PC-9 (cell line): ENCODE measurements at regions of chr9 and their contacts with region 1.

Region 1: GRCh38 chr9:36008774-36009300 is 27.9 kb upstream of the RECK start:
- DNase-seq: peak in 1 of 2 experiments; percentile 15
- H3K4me3 ChIP-seq: no peak overlapping the region
- H3K27ac ChIP-seq: no peak overlapping the region
- H3K4me1 ChIP-seq: no peaks in the 10 kb centered on the region
- H3K27me3 ChIP-seq: peaks cover 8% of the 10 kb centered on the region
- CTCF ChIP-seq: peak; percentile 80

Region 2: DNA sequence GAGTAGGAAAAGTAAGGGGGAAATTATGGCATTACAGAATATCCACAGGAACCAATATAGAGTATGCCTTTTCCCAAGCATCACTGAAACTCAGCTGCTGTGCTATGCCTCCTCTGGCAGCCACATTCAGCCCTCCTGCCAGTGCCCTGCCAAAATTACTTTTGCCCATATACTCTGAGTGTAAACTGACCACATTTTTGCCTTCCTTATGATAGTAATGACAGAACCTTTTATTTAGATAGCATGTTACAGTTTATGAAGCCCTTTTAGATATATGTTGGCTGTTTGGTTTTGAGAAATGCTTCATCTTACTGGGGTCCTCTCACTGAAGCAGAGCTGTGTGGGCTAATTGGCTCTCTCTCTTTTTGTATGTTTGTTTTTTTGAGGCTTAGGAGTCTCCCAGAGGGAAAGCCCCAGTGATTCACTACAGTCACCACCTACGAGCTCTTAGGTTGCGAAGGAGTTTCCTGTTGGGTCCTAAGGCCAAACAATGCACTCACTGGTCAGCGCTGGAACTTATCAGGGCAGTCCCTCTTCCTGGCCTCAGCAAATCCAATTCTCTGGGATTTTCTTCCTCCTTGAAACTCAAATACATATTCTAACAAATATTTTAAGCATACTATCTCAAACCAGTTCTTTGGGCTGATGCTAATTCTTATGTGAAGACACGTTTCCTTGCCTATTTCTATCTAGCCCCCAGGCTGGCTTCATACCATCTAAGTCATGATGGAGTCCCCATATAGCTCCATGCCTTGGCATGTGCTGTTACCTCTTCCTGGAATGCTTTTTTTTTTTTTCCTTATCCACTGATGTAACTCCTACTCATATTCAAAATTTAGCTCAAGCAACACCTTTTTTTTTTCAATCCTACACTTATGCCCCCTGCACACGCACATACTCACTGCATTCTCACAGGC is 1047.0 kb before region 1 on chr9:
- CTCF ChIA-PET with region 1: no interaction called
- POLR2A ChIA-PET with region 1: no interaction called
- intact Hi-C with region 1: no loop called
- DNase-seq: no peak
- H3K4me3 ChIP-seq: no peak overlapping the region
- H3K27ac ChIP-seq: no peak overlapping the region
- H3K4me1 ChIP-seq: no peaks in the 10 kb centered on the region
- H3K27me3 ChIP-seq: 0 out of 2 replicates have a peak, but pooled peaks cover 4% of the 10 kb centered on the region
- CTCF ChIP-seq: no peak

Region 3: DNA sequence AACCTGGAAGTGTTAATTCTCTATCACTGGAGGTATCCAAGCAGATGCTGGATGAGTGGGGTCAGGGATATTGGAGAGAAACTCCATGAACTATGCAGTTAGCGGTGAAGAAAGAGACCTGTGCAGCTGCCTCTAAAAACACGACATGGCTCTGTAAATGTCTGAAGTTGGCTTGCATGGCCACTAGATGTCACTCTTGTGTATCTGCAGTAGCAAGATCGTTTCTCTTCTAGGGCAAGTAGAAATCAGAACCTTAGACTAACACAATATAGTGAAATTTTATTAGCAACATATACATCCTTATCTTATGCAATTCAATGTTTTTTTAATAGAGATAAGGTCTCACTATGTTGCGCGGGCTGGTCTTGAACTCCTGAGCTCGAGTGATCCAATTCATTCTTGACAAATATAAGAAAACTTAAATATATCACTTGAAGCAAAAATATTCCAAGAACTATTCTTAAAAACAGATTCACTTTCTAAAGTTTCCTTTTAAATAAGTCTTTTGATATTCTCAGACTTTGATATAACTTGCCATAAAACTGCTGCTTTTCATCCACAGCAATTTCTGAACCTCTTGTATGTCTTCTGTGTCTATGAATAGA is 53.8 kb before region 1 on chr9:
- CTCF ChIA-PET with region 1: interaction called, 11 read pairs
- POLR2A ChIA-PET with region 1: no interaction called
- intact Hi-C with region 1: no loop called
- DNase-seq: peak; percentile 30 to 56
- H3K4me3 ChIP-seq: no peak overlapping the region
- H3K27ac ChIP-seq: no peak overlapping the region
- H3K4me1 ChIP-seq: peaks cover 13% of the 10 kb centered on the region
- H3K27me3 ChIP-seq: no peaks in the 10 kb centered on the region
- CTCF ChIP-seq: peak; percentile 77